ENCODE measurements at regions of chr9 and their contacts with region 1.

Region 1: GRCh38 chr9:87324613-87325194 is 173.0 kb upstream of the DAPK1 start:
- H3K4me3 ChIP-seq: no peak overlapping the region
- H3K27ac ChIP-seq: no peak overlapping the region
- H3K4me1 ChIP-seq: no peaks in the 10 kb centered on the region
- CTCF ChIP-seq: peak; percentile 70

Region 2: GRCh38 chr9:86413966-86414880 is 910.5 kb before region 1 on chr9:
- CTCF ChIA-PET with region 1: interaction called, 20 read pairs
- POLR2A ChIA-PET with region 1: no interaction called
- H3K4me3 ChIP-seq: no peak overlapping the region
- H3K27ac ChIP-seq: no peak overlapping the region
- H3K4me1 ChIP-seq: no peaks in the 10 kb centered on the region
- CTCF ChIP-seq: no peak

Region 3: DNA sequence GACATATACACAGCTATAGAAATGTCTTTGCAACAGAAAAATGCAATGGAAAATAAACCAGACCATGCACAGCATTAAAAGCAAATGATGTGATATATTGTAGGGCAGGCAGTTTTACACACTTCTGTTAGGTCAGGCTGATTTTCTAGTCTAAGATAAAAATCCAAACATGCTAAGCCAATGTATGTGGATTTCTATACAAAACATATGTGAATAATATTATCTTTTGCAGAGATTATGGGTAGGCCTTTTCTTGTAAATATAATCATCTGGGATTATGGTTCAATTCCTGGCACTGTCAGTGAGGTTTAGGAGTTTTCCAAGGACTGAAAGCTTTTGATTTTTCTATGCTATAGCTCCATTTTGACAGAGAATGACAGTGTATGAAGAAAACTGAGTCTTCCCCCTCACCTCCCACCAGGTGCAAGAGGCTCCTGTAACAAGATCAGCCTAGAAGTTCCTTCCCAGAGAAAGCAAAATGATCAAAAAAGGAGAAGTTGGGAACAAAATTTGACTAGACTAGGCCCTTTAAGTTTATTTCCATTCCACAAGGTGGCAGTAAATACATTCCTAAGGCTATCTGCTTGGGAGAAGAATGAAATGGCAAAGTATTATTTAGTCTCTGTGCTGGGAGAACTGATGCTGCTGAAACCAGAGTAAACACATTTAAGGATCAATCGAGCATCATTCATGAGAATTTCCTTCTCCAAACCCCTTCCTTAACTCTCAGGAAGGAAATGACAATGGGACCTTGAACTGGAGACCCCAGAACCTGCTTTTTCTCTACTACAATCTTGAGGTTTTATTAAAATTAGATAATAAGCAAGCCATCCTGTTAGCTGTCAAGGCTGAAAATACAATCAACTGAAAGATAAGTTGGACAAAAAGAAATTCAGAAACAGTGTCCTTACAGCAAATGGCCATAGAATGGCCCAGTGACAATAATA is 837.5 kb before region 1 on chr9:
- CTCF ChIA-PET with region 1: interaction called, 45 read pairs
- POLR2A ChIA-PET with region 1: no interaction called
- H3K4me3 ChIP-seq: no peak overlapping the region
- H3K27ac ChIP-seq: no peak overlapping the region
- H3K4me1 ChIP-seq: peaks cover 3% of the 10 kb centered on the region; the same call in 1 of the 2 replicates
- CTCF ChIP-seq: peak; percentile 38; the same call in 1 of the 2 replicates